Endothelial cell of umbilical vein (primary cell): ENCODE measurements at regions of chr7 and their contacts with region 1.

Region 1: DNA sequence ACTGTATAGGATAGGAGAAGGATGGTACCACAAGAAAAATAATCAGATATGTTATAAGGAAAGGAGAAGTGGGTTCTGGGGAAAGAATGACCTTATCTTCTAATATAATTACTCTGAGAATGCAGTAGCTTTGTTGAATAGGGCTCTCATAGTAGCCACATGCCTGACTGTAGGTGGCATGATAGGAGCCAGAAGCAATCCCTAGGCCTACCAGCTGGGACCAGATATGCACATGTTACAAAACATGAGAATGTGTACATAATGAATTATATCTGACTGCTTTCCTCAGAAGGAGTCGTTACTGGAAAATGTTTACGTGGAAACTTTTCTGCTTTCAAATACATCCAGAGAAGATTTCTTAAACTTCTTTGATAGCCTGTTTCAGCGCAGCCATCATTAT is 53.2 kb upstream of the FAM3C start:
- DNase-seq: no peak
- H3K4me3 ChIP-seq: no peak overlapping the region
- H3K27ac ChIP-seq: no peak overlapping the region
- H3K4me1 ChIP-seq: peaks cover 11% of the 10 kb centered on the region
- H3K27me3 ChIP-seq: no peaks in the 10 kb centered on the region
- CTCF ChIP-seq: no peak
- POLR2A ChIP-seq: no peak

Region 2: GRCh38 chr7:121437456-121438127 is 11.7 kb before region 1 on chr7:
- CTCF ChIA-PET with region 1: interaction called, 4 read pairs
- POLR2A ChIA-PET with region 1: interaction called, 5 read pairs
- dilution Hi-C with region 1: no loop called
- intact Hi-C with region 1: loop called (anchors 1 kb)
- DNase-seq: peak; percentile 11
- H3K4me3 ChIP-seq: no peak overlapping the region
- H3K27ac ChIP-seq: no peak overlapping the region
- H3K4me1 ChIP-seq: peaks cover 10% of the 10 kb centered on the region
- H3K27me3 ChIP-seq: no peaks in the 10 kb centered on the region
- CTCF ChIP-seq: no peak
- POLR2A ChIP-seq: no peak

Region 3: GRCh38 chr7:121473645-121474300 is 24.4 kb after region 1 on chr7:
- CTCF ChIA-PET with region 1: interaction called, 3 read pairs
- POLR2A ChIA-PET with region 1: no interaction called
- dilution Hi-C with region 1: no loop called
- intact Hi-C with region 1: loop called (anchors 2 kb)
- DNase-seq: no peak
- H3K4me3 ChIP-seq: no peak overlapping the region
- H3K27ac ChIP-seq: no peak overlapping the region
- H3K4me1 ChIP-seq: no peaks in the 10 kb centered on the region
- H3K27me3 ChIP-seq: no peaks in the 10 kb centered on the region
- CTCF ChIP-seq: no peak
- POLR2A ChIP-seq: no peak

Region 4: GRCh38 chr7:121504478-121504877 is 55.1 kb after region 1 on chr7:
- CTCF ChIA-PET with region 1: no interaction called
- POLR2A ChIA-PET with region 1: no interaction called
- dilution Hi-C with region 1: no loop called
- intact Hi-C with region 1: loop called (anchors 5 kb)
- DNase-seq: peak; percentile 83
- H3K4me3 ChIP-seq: peak overlapping the region in 1 of 3 experiments; percentile 8
- H3K27ac ChIP-seq: peak overlapping the region; percentile 86
- H3K4me1 ChIP-seq: peaks cover 9% of the 10 kb centered on the region
- H3K27me3 ChIP-seq: no peaks in the 10 kb centered on the region
- CTCF ChIP-seq: no peak
- POLR2A ChIP-seq: no peak